Tibial artery (tissue), 4 donors: ENCODE measurements at regions of chr14 and their contacts with region 1.

Region 1: DNA sequence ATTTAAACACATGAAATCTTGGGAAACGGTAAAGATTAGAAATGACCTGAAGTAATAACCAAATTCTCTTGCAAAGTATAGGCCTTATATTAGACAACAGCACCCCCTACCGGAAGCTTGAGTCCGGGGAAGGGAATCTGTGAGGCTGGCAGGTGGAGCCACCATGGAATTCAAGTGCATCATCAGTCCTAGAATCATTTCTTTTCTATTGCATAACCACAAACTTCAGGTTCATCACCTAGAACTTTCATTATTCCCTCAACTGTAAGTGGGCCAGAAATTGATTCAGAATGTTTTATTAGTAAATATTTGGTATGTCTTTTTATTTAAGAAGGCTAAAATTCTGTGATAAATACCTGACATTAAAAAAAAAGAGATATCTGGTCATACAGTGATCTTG is 48.5 kb downstream of the AP5M1 start:
- DNase-seq: peak; percentile 66 to 73
- H3K4me3 ChIP-seq: no peak overlapping the region
- H3K27ac ChIP-seq: no peak overlapping the region
- H3K4me1 ChIP-seq: no peaks in the 10 kb centered on the region
- H3K27me3 ChIP-seq: peaks cover 0 to 6% of the 10 kb centered on the region in 2 donors
- CTCF ChIP-seq: peak; percentile 60 to 69

Region 2: DNA sequence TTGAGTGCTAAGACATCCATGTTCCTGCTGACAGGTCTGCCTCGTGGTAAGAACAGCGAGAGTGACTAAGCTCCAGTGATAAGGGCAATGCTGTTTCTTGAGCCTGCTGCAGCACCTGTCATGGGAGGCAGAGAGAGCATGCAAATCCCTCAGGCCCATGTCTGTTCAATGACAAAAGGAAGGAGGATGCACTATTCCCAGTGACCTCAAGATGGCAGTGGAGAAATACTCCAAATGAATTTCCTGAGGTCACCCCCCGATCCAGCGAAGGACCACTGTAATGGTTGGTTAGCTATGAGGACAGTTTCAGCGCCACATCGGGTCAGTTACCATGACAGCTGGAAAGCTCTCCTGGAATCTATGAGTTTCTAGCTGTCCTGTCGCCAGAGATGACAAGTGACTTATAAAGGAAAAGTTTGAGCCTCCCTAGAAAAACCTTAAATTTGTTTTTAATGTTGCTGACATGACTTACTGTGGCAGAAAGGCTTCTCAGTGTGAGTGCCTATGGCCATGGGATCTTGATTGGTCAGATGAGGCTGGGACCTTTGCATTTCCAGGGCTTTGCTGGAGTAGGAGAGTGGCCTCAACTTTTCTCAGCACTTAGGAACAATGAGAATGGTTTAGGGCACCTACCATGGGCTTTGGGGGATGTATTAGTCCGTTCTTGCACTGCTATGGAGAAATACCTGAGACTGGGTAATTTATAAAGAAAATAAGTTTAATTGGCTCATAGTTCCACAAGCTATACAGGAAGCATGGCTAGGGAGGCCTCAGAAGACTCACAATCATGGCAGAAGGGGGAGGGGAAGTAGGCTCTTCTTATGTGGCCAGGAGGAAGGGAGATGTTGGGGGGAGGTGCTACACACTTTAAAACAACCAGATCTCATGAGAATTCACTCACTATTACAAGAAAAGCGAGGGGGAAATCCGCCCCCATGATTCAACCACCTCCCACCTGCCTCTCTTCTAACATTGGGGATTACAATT is 825.7 kb before region 1 on chr14:
- intact Hi-C with region 1: loop called (anchors 5 kb)
- DNase-seq: peak in 1 of 2 donors; percentile 28
- H3K4me3 ChIP-seq: no peak overlapping the region
- H3K27ac ChIP-seq: no peak overlapping the region
- H3K4me1 ChIP-seq: peaks cover 0 to 8% (median 3%) of the 10 kb centered on the region in 4 donors
- H3K27me3 ChIP-seq: no peaks in the 10 kb centered on the region
- CTCF ChIP-seq: peak; percentile 46 to 57